Testis (tissue), 5 donors: ENCODE measurements at regions of chr1 and their contacts with region 1.

Region 1: GRCh38 chr1:13960375-13960987 is 260.5 kb downstream of the PRDM2 start:
- DNase-seq: peak; percentile 89
- H3K4me3 ChIP-seq: no peak overlapping the region
- H3K27ac ChIP-seq: no peak overlapping the region
- H3K4me1 ChIP-seq: no peaks in the 10 kb centered on the region
- H3K27me3 ChIP-seq: no peaks in the 10 kb centered on the region
- CTCF ChIP-seq: peak; percentile 91 to 98 (median 95)
- POLR2A ChIP-seq: no peak

Region 2: GRCh38 chr1:13662493-13662892 is 298.0 kb before region 1 on chr1:
- intact Hi-C with region 1: loop called (anchors 5 kb)
- DNase-seq: peak; percentile 26
- H3K4me3 ChIP-seq: no peak overlapping the region
- H3K27ac ChIP-seq: peak overlapping the region in 1 of 2 donors; percentile 26
- H3K4me1 ChIP-seq: no peaks in the 10 kb centered on the region
- H3K27me3 ChIP-seq: no peaks in the 10 kb centered on the region
- CTCF ChIP-seq: no peak
- POLR2A ChIP-seq: no peak

Region 3: DNA sequence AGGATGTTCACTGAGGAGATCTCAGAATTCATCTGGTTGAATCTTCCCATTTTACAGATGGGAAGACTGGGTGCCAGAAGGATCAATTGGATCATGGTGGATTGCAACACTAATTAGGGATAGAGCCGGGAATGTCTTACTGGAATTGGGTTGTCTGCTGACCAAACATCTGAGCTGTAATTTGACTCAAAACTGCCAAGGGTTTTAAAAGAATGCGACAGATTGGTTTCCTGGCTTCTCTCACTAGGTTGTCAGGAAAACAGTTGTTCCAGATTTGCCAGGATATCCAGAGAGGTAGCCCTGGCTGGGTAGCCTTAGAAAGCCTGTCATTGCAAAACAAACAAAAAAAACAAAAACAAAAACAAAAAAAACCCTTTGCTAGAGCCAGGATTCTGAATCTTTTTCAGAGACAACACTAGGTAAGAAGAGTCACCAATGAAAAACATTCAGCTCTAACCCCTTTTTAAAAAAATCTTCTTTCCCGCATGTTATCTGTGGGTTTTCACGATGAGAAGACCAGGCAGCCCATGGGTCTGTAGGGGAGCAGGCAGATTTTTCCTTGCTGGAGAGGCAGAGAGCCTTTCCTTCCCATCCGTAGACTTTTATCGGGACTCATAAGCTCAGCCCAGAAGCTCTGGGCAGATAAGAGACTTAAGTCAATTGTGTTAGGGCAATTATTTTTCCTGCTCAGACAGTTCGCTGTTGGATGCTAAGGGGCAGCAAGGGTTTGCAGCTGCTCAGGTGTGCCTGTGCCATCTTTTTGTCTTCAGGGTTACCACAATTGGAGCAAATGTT is 158.4 kb after region 1 on chr1:
- intact Hi-C with region 1: no loop called
- DNase-seq: no peak
- H3K4me3 ChIP-seq: no peak overlapping the region
- H3K27ac ChIP-seq: no peak overlapping the region
- H3K4me1 ChIP-seq: no peaks in the 10 kb centered on the region
- H3K27me3 ChIP-seq: no peaks in the 10 kb centered on the region
- CTCF ChIP-seq: no peak
- POLR2A ChIP-seq: no peak